Activated CD4-positive, alpha-beta T cell treated with anti-CD3 and anti-CD28 coated beads, Interleukin-2, amount 10 ng/mL, durations not matched to agents 24 days and 14 days (primary cell): ENCODE measurements at regions of chr15 and their contacts with region 1.

Region 1: GRCh38 chr15:92714477-92715401 is 59.2 kb upstream of the FAM174B start:
- DNase-seq: peak; percentile 92
- H3K4me3 Mint-ChIP-seq: peak overlapping the region; percentile 61
- H3K27ac Mint-ChIP-seq: no peak overlapping the region
- H3K4me1 Mint-ChIP-seq: peaks cover 7% of the 10 kb centered on the region
- H3K27me3 Mint-ChIP-seq: peaks cover 28% of the 10 kb centered on the region

Region 2: DNA sequence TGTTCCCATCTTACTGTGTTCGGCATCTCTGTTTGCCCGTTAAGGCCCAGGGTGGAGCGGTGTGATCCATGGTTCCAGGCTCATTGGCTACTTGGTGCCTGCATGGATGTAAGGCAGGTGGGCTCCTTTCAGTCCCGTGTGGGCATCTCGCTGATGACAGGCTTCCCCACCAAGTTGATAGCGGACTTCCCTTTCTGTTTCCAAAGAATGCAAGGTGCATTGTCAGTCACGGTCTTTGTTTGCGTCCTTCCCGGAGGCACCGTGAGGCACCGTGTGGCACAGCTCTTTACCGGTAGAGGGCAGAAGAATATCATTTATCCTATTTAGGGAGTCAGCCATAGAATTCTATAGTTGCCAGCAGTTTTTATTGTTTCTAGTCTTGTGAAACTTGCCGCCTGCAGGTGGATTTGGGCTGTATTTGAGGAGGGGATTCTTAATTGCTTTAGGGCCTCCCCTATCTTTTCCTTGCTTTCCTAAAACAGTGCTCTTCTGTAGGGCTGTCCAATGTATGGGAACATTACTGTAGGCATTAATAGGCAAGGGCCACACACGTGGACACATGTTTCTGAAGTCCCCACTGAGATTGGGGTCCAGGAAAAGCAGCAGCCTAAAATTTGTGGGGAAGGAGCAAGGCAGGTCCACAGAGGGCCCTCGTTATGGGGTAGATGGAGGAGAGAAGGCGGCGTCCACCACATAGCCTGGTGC is 617.1 kb before region 1 on chr15:
- intact Hi-C with region 1: loop called (anchors 1 kb)
- DNase-seq: peak; percentile 85
- H3K4me3 Mint-ChIP-seq: peak overlapping the region; percentile 38
- H3K27ac Mint-ChIP-seq: no peak overlapping the region
- H3K4me1 Mint-ChIP-seq: peaks cover 45% of the 10 kb centered on the region
- H3K27me3 Mint-ChIP-seq: no peaks in the 10 kb centered on the region

Region 3: DNA sequence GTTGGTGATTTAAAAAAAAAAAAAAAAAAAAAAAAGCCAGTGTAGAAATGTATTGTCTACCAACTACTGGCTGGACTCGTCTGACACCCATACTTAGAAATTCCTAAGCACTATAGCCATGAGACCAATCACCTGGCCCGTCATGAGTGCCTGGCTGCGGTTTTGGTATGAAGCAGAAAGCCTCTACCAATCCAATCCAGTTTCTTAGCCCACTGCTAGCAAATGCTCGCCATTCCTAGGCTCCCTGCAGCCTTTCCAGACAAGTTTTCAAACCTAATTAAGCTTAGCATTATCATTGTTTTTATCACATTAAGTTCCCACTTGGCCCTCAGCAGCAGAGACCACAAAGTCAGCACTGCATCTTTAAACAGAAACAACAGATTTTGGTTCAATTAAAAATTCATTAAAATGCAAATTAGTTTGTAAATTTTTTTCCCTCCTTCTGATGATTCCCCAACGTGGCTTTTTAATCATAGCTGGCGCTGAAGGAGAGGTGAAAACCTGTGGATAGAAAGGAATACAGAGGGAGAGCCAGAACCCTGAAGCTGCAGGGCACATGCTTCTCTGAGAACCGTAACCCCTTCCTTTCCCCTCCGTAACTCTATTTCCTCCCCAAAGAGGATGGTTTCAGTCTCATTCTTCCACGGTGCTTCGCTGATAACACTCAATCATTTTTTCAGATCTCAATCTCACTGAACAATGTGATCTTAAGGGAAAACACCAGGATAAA is 353.3 kb before region 1 on chr15:
- intact Hi-C with region 1: no loop called
- DNase-seq: no peak
- H3K4me3 Mint-ChIP-seq: no peak overlapping the region
- H3K27ac Mint-ChIP-seq: no peak overlapping the region
- H3K4me1 Mint-ChIP-seq: no peaks in the 10 kb centered on the region
- H3K27me3 Mint-ChIP-seq: peaks cover 4% of the 10 kb centered on the region

Region 4: GRCh38 chr15:92391640-92392039 is 323.1 kb before region 1 on chr15:
- intact Hi-C with region 1: loop called (anchors 10 kb)
- DNase-seq: peak; percentile 61
- H3K4me3 Mint-ChIP-seq: no peak overlapping the region
- H3K27ac Mint-ChIP-seq: no peak overlapping the region
- H3K4me1 Mint-ChIP-seq: peaks cover 2% of the 10 kb centered on the region
- H3K27me3 Mint-ChIP-seq: peaks cover 56% of the 10 kb centered on the region

Region 5: GRCh38 chr15:92521624-92522008 is 193.1 kb before region 1 on chr15:
- intact Hi-C with region 1: loop called (anchors 1 kb)
- DNase-seq: peak; percentile 83
- H3K4me3 Mint-ChIP-seq: no peak overlapping the region
- H3K27ac Mint-ChIP-seq: no peak overlapping the region
- H3K4me1 Mint-ChIP-seq: peaks cover 2% of the 10 kb centered on the region
- H3K27me3 Mint-ChIP-seq: peaks cover 7% of the 10 kb centered on the region

Region 6: DNA sequence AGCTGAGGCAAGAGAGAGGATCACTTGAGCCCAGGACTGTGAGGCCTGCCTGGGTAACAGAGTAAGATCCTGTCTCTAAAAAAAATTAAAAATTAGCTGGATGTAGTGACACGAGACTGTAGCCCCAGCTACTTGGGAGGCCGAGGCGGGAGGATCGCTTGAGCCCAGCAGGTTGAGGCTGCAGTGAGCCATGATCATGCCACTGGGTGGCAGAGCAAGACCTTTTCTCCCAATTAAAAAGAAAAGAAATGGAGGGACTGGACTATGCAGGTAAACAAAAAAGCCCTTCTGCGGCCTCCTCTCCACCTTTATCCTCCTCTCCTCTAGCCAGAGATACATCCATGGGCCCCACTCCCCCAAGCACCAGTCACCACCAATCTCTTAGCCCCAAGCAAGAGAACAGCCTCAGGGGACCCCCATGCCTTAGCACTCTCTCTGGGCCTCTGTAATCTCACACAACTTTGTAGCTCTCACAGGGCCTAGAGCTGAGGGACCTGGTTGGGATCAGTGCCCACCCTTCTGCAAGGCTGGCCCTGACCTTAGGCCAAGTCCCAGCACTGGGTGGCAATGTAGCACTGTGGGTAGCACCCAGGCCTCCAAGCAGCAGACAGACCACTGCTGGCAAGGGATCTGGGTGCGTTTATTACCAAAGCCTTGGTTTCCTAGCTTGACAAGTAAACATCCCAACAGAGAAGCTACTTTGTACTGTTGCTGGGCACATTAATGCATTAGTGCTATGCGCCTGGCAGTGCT is 102.6 kb before region 1 on chr15:
- intact Hi-C with region 1: loop called (anchors 5 kb)
- DNase-seq: no peak
- H3K4me3 Mint-ChIP-seq: no peak overlapping the region
- H3K27ac Mint-ChIP-seq: no peak overlapping the region
- H3K4me1 Mint-ChIP-seq: no peaks in the 10 kb centered on the region
- H3K27me3 Mint-ChIP-seq: no peaks in the 10 kb centered on the region

Region 7: GRCh38 chr15:92681141-92681631 is 33.6 kb before region 1 on chr15:
- intact Hi-C with region 1: no loop called
- DNase-seq: no peak
- H3K4me3 Mint-ChIP-seq: no peak overlapping the region
- H3K27ac Mint-ChIP-seq: no peak overlapping the region
- H3K4me1 Mint-ChIP-seq: peaks cover 2% of the 10 kb centered on the region
- H3K27me3 Mint-ChIP-seq: peaks cover 22% of the 10 kb centered on the region